Aorta (tissue), 5 donors: ENCODE measurements at regions of chr16 and their contacts with region 1.

Region 1: GRCh38 chr16:72847187-72848027 is 200.5 kb downstream of the ZFHX3 start:
- DNase-seq: no peak
- ATAC-seq: no peak
- H3K4me3 ChIP-seq: no peak overlapping the region
- H3K27ac ChIP-seq: peak overlapping the region; percentile 86 to 87
- H3K4me1 ChIP-seq: peaks cover 6 to 10% of the 10 kb centered on the region in 2 donors
- H3K27me3 ChIP-seq: no peaks in the 10 kb centered on the region

Region 2: GRCh38 chr16:72787514-72788268 is 59.7 kb before region 1 on chr16:
- intact Hi-C with region 1: loop called in 1 of 2 experiments (anchors 5 kb)
- DNase-seq: peak; percentile 87 to 89
- ATAC-seq: peak; percentile 89
- H3K4me3 ChIP-seq: peak overlapping the region; percentile 30 to 45
- H3K27ac ChIP-seq: peak overlapping the region; percentile 94 to 95
- H3K4me1 ChIP-seq: peaks cover 0 to 4% of the 10 kb centered on the region in 2 donors
- H3K27me3 ChIP-seq: no peaks in the 10 kb centered on the region

Region 3: DNA sequence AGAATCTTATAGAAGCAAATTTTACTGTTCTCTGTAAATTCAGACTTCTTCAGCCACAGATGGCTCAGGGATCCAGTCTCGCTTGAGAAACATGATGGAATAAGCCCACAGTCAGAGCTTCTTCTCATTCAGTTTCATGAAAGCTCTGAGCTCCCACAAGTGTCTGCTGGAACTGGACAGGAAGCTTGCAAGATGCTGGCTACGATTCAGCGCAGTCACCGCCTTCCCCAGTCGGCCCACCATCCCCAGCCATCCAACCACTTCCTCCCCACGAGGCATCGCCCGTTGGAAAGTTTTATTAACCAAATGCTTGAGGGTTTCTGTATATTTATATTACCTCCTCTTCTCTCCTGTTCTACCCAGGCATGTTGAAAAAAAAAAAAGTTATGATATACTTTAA is 28.8 kb after region 1 on chr16:
- intact Hi-C with region 1: no loop called
- DNase-seq: peak; percentile 87 to 89
- ATAC-seq: peak; percentile 69
- H3K4me3 ChIP-seq: no peak overlapping the region
- H3K27ac ChIP-seq: peak overlapping the region in 1 of 2 donors; percentile 4
- H3K4me1 ChIP-seq: peaks cover 0 to 3% of the 10 kb centered on the region in 2 donors
- H3K27me3 ChIP-seq: no peaks in the 10 kb centered on the region

Region 4: DNA sequence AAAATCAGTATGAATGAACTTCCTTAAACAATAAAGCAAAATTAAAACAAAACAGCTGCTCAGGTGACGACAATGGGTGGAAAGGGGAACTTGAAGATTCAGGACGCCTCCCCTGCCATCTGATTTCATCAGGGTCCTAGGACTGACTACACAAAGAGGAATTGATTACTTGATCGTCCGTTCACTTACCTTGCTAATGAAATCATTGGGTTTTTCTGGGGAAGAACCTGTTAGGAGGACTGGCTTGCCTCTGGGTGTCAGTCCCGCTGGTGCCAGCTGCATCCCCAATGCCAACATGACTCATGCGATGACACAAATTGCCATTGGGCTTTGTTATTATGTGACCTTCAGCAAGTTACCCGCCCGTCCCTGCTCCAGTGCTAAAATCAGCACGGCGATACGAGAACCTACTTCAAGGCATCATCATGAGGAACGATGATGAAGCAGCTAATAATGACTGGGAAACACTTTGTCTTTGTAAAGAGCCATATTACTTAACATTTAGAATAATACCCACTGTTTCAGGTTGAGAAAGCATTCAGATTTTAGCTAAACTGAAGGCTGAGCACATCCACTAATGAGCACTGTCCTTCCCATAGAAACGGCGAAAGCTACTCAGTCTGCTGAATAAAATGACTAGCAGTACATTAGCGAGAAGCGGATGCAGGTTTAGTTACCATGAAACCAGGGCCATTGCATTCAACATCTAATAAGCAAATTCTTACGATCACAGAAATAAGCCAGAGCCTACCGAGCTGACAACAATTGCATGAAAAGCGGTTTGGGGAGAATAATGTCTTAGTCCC is 61.2 kb after region 1 on chr16:
- intact Hi-C with region 1: no loop called
- DNase-seq: no peak
- ATAC-seq: no peak
- H3K4me3 ChIP-seq: no peak overlapping the region
- H3K27ac ChIP-seq: no peak overlapping the region
- H3K4me1 ChIP-seq: no peaks in the 10 kb centered on the region
- H3K27me3 ChIP-seq: no peaks in the 10 kb centered on the region

Region 5: DNA sequence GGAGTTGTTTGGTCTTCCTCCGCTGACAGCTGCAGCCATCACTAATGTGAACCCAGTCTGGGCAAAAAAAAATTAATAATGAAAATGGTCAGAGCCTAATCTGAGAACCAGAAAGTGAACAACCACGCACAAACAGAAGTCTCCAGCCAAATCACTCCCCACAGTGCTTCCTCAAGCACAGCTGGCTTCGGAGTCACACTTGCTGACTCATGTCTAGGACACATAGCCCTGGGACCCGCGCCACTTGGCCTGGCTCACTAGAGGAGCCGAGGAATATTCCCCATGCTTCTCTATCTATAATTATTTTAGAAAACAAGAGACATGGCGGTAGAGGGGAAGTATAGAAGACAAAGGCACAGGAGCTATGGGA is 91.4 kb after region 1 on chr16:
- intact Hi-C with region 1: loop called (anchors 2 to 5 kb)
- DNase-seq: peak; percentile 93 to 96
- ATAC-seq: peak; percentile 92
- H3K4me3 ChIP-seq: no peak overlapping the region
- H3K27ac ChIP-seq: peak overlapping the region; percentile 47 to 96
- H3K4me1 ChIP-seq: peaks cover 5 to 10% of the 10 kb centered on the region in 2 donors
- H3K27me3 ChIP-seq: no peaks in the 10 kb centered on the region

Region 6: GRCh38 chr16:73058221-73058615 is 210.8 kb after region 1 on chr16:
- intact Hi-C with region 1: loop called (anchors 5 kb)
- DNase-seq: peak; percentile 73 to 84
- ATAC-seq: no peak
- H3K4me3 ChIP-seq: peak overlapping the region; percentile 77 to 100
- H3K27ac ChIP-seq: peak overlapping the region; percentile 92 to 100
- H3K4me1 ChIP-seq: no peaks in the 10 kb centered on the region
- H3K27me3 ChIP-seq: no peaks in the 10 kb centered on the region

Region 7: DNA sequence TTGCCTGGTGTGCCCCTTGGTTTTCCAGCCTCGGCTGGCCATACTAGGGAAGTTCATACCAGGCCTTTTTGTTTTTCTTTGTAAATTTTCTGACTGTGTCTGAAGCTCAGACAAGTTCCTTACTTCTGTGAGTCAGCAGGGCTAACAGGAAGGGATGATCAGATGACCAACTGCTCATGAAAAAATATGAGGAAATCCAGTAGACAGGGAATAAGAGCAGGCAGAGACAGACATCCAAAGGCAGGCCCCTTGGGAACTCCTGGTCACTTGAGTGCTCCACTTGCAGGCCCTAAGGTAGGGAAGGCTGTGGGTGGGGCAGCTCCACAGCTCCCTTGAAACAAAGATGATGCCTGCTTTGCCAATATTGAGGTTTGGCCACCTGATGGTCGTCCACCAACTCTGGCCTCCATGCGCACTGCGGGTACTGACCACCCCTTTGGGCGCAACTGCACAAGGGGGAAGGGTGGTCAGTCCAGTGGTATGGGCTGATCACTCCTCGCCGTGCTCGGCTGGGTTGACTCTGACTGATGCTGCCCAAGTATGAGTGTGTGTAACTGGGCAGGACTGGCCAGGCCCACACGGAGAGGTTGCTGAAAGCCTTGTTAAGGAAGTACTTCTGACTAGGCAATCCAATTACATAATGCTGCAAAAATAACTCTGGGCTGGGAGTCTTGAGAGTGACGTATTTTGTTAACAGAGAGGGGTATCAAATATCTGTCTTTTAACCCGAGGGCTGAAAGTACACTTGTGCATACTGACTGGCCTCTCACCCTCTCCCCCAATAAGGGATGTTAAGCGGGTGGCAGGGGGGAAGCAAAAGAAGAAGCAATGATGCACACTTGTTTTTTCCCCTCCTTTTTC is 221.4 kb after region 1 on chr16:
- intact Hi-C with region 1: loop called in 1 of 2 experiments (anchors 5 kb)
- DNase-seq: peak; percentile 93 to 95
- ATAC-seq: peak; percentile 90
- H3K4me3 ChIP-seq: no peak overlapping the region
- H3K27ac ChIP-seq: peak overlapping the region; percentile 99 to 100
- H3K4me1 ChIP-seq: peaks cover 2 to 4% of the 10 kb centered on the region in 2 donors
- H3K27me3 ChIP-seq: no peaks in the 10 kb centered on the region

Region 8: GRCh38 chr16:73172241-73172972 is 325.0 kb after region 1 on chr16:
- intact Hi-C with region 1: loop called in 1 of 2 experiments (anchors 10 kb)
- DNase-seq: peak; percentile 83 to 93
- ATAC-seq: peak; percentile 73
- H3K4me3 ChIP-seq: no peak overlapping the region
- H3K27ac ChIP-seq: peak overlapping the region; percentile 76 to 94
- H3K4me1 ChIP-seq: peaks cover 0 to 5% of the 10 kb centered on the region in 2 donors
- H3K27me3 ChIP-seq: no peaks in the 10 kb centered on the region